ENCODE measurements at regions of chr1 and their contacts with region 1.

Region 1: DNA sequence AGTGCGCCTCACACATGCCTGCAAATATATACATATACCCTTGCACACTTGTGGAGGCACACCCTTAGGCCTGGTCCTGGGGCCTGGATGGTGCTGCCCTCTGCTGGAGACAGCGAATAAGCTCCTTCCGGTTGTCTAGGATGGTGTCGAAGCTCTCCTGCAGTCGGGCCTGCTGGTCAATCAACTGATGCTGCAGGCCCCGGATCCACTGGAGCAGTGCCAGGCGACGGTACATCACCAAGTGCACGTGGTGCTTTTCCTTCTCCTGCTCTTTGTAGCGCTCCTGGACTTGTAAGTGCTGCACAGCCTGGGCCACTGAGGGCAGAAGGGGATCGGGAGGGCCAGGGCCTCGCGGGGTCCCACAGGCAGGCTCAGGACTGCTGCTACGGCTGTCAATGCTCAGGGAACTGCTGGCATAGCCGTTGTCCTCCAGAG is 3.1 kb downstream of the C1orf216 start:
- DNase-seq: peak; percentile 67 to 74
- ATAC-seq: peak; percentile 67 to 75; a peak in 5 of 6 replicates
- H3K4me3 ChIP-seq: no peak overlapping the region
- H3K27ac ChIP-seq: no peak overlapping the region
- H3K4me1 ChIP-seq: peaks cover 17% of the 10 kb centered on the region
- CTCF ChIP-seq: peak; percentile 72
- EP300 ChIP-seq: no peak
- POLR2A ChIP-seq: no peak
- RAD21 ChIP-seq: peak; percentile 49 to 63

Region 2: DNA sequence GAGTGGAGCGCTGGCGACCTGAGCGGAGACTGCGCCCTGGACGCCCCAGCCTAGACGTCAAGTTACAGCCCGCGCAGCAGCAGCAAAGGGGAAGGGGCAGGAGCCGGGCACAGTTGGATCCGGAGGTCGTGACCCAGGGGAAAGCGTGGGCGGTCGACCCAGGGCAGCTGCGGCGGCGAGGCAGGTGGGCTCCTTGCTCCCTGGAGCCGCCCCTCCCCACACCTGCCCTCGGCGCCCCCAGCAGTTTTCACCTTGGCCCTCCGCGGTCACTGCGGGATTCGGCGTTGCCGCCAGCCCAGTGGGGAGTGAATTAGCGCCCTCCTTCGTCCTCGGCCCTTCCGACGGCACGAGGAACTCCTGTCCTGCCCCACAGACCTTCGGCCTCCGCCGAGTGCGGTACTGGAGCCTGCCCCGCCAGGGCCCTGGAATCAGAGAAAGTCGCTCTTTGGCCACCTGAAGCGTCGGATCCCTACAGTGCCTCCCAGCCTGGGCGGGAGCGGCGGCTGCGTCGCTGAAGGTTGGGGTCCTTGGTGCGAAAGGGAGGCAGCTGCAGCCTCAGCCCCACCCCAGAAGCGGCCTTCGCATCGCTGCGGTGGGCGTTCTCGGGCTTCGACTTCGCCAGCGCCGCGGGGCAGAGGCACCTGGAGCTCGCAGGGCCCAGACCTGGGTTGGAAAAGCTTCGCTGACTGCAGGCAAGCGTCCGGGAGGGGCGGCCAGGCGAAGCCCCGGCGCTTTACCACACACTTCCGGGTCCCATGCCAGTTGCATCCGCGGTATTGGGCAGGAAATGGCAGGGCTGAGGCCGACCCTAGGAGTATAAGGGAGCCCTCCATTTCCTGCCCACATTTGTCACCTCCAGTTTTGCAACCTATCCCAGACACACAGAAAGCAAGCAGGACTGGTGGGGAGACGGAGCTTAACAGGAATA is 138.2 kb before region 1 on chr1:
- CTCF ChIA-PET with region 1: interaction called, 21 read pairs
- POLR2A ChIA-PET with region 1: no interaction called
- DNase-seq: no peak
- ATAC-seq: no peak
- H3K4me3 ChIP-seq: no peak overlapping the region
- H3K27ac ChIP-seq: no peak overlapping the region
- H3K4me1 ChIP-seq: no peaks in the 10 kb centered on the region
- CTCF ChIP-seq: no peak
- EP300 ChIP-seq: no peak
- POLR2A ChIP-seq: no peak
- RAD21 ChIP-seq: no peak

Region 3: DNA sequence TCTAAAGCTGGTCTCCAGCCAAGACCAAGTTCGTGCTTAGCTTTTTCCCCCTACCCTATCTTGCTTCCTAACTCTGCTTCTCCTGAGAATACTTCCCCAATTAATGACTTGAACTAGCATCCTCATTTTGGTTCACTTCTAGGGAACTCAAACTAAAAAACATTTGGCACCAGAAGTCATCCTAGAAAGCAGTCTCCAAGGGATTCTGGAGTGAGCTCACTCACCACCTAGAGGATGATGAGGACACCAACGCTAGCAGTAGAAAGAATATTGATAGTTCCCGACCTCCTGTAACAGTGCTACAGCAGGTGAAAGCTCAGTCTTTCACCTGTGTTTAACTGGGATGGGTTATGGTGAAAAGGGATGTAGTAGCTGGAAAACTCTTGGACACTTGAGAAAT is 69.5 kb before region 1 on chr1:
- CTCF ChIA-PET with region 1: interaction called, 11 read pairs
- POLR2A ChIA-PET with region 1: interaction called, 9 read pairs
- DNase-seq: peak; percentile 11 to 31
- ATAC-seq: peak in 1 of 2 experiments; percentile 44; a peak in 2 of 6 replicates
- H3K4me3 ChIP-seq: no peak overlapping the region
- H3K27ac ChIP-seq: no peak overlapping the region
- H3K4me1 ChIP-seq: no peaks in the 10 kb centered on the region
- CTCF ChIP-seq: no peak; the same call in 2 of the 3 replicates
- EP300 ChIP-seq: no peak
- POLR2A ChIP-seq: no peak
- RAD21 ChIP-seq: no peak

Measured in A549 (cell line).